ENCODE measurements at regions of chr2 and their contacts with region 1.

Region 1: DNA sequence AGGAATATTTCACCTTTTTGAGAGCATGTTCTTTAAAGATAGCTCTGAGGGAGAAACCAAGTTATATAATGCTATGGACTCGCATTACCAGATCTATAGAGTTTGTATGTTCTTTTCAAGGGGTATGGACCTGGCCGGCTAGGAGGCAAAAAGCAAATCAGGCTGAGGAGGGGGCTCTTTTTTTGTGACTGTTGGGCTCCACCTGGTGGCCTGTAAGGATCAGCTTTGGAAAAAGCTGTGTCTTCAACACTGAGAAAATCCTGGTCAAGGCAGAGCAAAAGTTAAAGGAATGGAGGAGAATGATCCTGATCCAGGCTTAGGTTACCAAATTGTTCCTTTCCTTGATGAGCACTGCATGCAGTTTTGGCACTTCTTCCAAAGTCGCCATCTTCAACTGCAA is 180.5 kb downstream of the DIS3L2 start:
- DNase-seq: peak in 5 of 14 experiments; percentile 2 to 45 (median 32)
- ATAC-seq: no peak
- H3K4me3 ChIP-seq: no peak overlapping the region
- H3K4me3 Mint-ChIP-seq: no peak overlapping the region
- H3K27ac ChIP-seq: no peak overlapping the region
- H3K27ac Mint-ChIP-seq: peak overlapping the region; percentile 15
- H3K4me1 ChIP-seq: peaks cover 7% of the 10 kb centered on the region
- H3K4me1 Mint-ChIP-seq: peaks cover 39% of the 10 kb centered on the region
- H3K27me3 ChIP-seq: no peaks in the 10 kb centered on the region
- H3K27me3 Mint-ChIP-seq: no peaks in the 10 kb centered on the region
- CTCF ChIP-seq: peak; percentile 58

Region 2: GRCh38 chr2:231900972-231901371 is 241.1 kb before region 1 on chr2:
- CTCF ChIA-PET with region 1: interaction called, 5 read pairs
- POLR2A ChIA-PET with region 1: no interaction called
- intact Hi-C with region 1: loop called in 1 of 2 experiments (anchors 5 kb)
- DNase-seq: no peak
- ATAC-seq: no peak
- H3K4me3 ChIP-seq: no peak overlapping the region
- H3K4me3 Mint-ChIP-seq: no peak overlapping the region
- H3K27ac ChIP-seq: no peak overlapping the region
- H3K27ac Mint-ChIP-seq: no peak overlapping the region
- H3K4me1 ChIP-seq: peaks cover 2% of the 10 kb centered on the region
- H3K4me1 Mint-ChIP-seq: no peaks in the 10 kb centered on the region
- H3K27me3 ChIP-seq: no peaks in the 10 kb centered on the region
- H3K27me3 Mint-ChIP-seq: peaks cover 4% of the 10 kb centered on the region
- CTCF ChIP-seq: no peak

Region 3: DNA sequence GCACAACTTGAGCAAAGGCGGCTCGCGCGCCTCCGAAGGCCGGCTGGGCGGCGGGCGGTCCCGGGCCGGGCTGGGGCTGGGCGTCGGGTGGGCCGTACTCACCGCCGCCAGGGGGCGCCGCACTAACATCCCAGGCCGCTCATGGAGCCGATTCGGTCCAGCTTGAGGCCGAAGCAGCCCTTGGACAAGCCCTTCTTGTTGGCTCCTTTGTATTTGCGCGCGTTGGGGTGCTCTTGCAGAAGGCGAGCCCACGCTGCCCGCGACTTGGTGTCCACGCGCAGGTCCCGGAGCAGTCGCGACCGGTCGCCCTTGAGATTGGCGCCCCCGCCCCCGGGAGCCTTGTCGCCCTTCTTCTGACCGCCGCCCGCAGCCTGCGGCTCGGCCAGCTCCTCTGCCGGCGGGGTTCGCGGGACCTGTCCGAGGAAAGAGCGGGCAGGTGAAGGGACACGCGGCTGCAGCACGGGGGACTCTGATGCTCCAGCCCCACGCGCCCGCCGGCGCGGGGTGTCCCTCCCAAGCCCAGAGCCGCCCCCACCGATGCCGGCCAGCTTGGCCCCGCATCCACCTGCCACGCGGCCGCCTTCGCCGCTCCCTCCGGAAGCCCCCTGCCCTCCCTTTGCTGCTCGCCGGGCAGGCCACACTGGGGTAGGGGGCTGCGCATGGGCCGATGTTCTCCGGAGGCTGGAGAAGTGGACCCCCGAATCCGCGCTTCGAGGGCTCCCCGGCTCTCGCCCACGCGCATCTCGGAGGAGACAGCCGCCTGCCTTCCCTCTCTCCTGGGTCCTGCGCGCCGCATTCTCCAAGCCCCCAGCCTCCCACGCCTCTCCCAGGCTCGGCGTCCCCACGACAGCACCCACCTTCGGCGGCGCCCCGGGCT is 216.5 kb before region 1 on chr2:
- CTCF ChIA-PET with region 1: no interaction called
- POLR2A ChIA-PET with region 1: no interaction called
- intact Hi-C with region 1: loop called in 1 of 2 experiments (anchors 1 kb)
- DNase-seq: peak; percentile 43 to 86 (median 62)
- ATAC-seq: peak; percentile 47
- H3K4me3 ChIP-seq: peak overlapping the region; percentile 29
- H3K4me3 Mint-ChIP-seq: no peak overlapping the region
- H3K27ac ChIP-seq: no peak overlapping the region
- H3K27ac Mint-ChIP-seq: no peak overlapping the region
- H3K4me1 ChIP-seq: peaks cover 22% of the 10 kb centered on the region
- H3K4me1 Mint-ChIP-seq: peaks cover 6% of the 10 kb centered on the region
- H3K27me3 ChIP-seq: peaks cover 40 to 58% of the 10 kb centered on the region in 2 experiments
- H3K27me3 Mint-ChIP-seq: peaks cover 55% of the 10 kb centered on the region
- CTCF ChIP-seq: peak; percentile 80

Region 4: GRCh38 chr2:232310121-232310520 is 168.1 kb after region 1 on chr2:
- CTCF ChIA-PET with region 1: interaction called, 3 read pairs
- POLR2A ChIA-PET with region 1: interaction called, 4 read pairs
- intact Hi-C with region 1: loop called in 1 of 2 experiments (anchors 5 kb)
- DNase-seq: peak in 6 of 14 experiments; percentile 23 to 59 (median 46)
- ATAC-seq: peak; percentile 78
- H3K4me3 ChIP-seq: no peak overlapping the region
- H3K4me3 Mint-ChIP-seq: peak overlapping the region; percentile 65
- H3K27ac ChIP-seq: peak overlapping the region in 1 of 2 donors; percentile 51
- H3K27ac Mint-ChIP-seq: peak overlapping the region; percentile 89
- H3K4me1 ChIP-seq: peaks cover 53% of the 10 kb centered on the region
- H3K4me1 Mint-ChIP-seq: peaks cover 78% of the 10 kb centered on the region
- H3K27me3 ChIP-seq: no peaks in the 10 kb centered on the region
- H3K27me3 Mint-ChIP-seq: no peaks in the 10 kb centered on the region
- CTCF ChIP-seq: no peak